ENCODE measurements at regions of chr3 and their contacts with region 1.

Region 1: DNA sequence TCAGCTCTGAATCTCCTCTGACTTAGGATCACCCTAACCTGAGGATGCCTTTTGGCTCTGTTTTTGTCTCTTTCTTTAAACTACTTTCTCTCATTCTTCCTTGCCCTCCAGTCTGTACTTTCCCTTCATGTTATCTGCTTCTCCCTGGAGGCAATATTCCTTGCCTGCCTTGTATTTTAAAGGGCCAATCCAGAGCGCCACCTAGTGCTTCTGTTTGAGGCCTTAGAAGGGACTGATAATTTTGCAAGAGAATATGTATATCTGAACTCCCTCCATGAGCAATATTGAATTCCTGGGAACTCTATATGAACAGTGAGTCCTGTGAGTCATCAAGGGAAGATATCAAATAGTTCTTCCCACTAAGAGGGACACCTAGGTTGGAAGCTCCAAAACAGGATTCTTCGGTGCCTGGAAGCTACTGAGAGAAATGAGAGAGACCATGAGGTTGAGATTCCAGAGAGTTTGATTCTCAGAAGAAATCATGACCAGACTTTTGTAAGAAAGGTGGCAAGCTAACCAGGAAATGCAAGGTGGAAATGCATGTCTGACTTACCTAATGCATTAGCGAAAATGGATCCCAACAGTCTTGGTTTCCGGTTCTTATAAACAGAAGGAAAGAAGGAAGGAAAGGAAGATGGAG is 203.8 kb upstream of the CD96 start:
- DNase-seq: peak; percentile 69
- H3K4me3 Mint-ChIP-seq: no peak overlapping the region
- H3K27ac Mint-ChIP-seq: no peak overlapping the region
- H3K4me1 Mint-ChIP-seq: peaks cover 13% of the 10 kb centered on the region
- H3K27me3 Mint-ChIP-seq: no peaks in the 10 kb centered on the region
- CTCF ChIP-seq: peak; percentile 47

Region 2: DNA sequence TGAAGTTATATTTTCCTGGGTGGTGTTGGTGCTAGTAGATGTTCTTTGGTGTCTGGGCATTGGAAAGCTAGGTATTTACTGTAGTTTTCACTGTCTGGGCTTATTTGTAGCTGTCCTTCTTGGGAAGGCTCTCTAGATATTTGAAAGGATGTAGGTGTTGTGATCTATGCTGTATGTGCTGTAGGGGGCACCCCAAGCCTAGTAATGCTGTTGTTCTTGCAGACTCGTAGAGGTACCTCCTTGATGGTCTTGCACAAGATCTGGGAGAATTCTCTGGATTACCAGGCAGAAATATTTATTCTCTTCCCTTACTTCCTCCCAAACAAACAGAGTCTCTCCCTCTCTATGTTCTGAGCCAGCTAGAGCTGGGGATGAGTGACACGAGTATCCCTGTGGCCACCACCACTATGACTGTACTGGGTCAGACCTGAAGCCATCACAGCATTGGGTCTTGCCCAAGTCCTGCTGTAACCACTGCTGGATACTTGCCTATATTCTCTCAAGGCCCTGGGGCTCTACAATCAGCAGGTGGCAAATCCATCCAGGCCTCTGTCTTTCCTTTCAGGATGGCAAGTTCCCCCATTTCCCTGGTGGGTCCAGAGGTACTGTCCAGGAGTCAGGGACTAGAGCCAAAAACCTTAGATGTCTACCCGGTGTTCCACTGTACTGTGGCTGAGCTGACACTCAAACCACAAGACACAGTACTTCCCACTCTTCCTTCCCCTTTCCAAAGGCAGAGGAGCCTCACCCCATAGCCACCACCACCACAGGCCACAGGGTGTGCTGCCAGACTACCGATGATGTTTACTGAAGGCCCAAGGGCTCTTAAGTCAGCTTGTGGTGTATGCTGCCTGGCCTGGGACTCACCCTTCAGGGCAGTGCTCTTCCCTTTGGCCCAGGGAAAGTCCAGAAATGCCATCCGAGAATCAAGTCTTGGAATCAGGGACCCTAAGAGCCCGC is 1805.6 kb before region 1 on chr3:
- CTCF ChIA-PET with region 1: no interaction called
- intact Hi-C with region 1: loop called (anchors 5 kb)
- DNase-seq: peak; percentile 84
- H3K4me3 Mint-ChIP-seq: no peak overlapping the region
- H3K27ac Mint-ChIP-seq: peak overlapping the region; percentile 4
- H3K4me1 Mint-ChIP-seq: peaks cover 15% of the 10 kb centered on the region
- H3K27me3 Mint-ChIP-seq: no peaks in the 10 kb centered on the region
- CTCF ChIP-seq: peak; percentile 21

Region 3: DNA sequence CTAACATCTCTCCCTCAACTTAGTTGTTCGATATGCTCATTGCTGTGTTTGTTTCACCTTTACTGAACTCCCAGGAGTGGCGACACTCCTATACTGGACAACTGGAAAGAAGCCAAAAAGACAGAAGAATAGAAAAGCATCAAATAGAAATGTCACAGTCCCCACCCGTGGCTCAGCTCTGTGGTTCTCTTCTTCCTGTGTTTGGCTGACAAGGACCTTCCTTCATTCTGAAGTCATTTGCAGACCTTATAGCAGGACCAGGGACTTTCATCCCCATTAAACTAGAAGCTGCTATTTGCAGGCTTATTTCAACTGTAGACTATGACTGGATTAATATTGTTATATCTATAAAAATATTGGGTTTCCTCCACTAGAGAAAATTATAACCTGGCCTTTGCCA is 140.7 kb before region 1 on chr3:
- CTCF ChIA-PET with region 1: no interaction called
- intact Hi-C with region 1: loop called (anchors 5 kb)
- DNase-seq: no peak
- H3K4me3 Mint-ChIP-seq: no peak overlapping the region
- H3K27ac Mint-ChIP-seq: no peak overlapping the region
- H3K4me1 Mint-ChIP-seq: peaks cover 14% of the 10 kb centered on the region
- H3K27me3 Mint-ChIP-seq: no peaks in the 10 kb centered on the region
- CTCF ChIP-seq: no peak

Region 4: DNA sequence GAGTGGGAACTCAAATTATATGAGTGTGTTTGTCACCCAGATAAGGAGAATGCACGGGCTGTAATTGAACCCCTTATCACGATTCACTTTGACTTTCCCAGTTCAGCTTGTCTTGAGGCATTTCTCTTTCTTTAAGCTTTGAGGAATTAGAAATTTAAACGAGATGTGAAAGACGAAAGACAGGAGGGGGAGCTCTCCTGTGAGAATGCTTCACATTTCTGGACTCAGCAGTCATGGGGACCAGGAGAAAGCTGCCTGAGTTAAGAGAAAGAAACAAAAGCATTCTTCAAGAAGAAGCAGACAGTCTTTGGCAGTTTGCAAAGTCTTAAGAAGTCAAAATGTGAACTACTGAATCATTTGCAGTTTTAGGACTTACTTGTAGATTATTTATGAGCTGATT is 61.0 kb before region 1 on chr3:
- CTCF ChIA-PET with region 1: no interaction called
- intact Hi-C with region 1: loop called (anchors 2 kb)
- DNase-seq: no peak
- H3K4me3 Mint-ChIP-seq: no peak overlapping the region
- H3K27ac Mint-ChIP-seq: no peak overlapping the region
- H3K4me1 Mint-ChIP-seq: peaks cover 9% of the 10 kb centered on the region
- H3K27me3 Mint-ChIP-seq: no peaks in the 10 kb centered on the region
- CTCF ChIP-seq: no peak

Region 5: GRCh38 chr3:111539351-111540331 is 201.5 kb after region 1 on chr3:
- CTCF ChIA-PET with region 1: no interaction called
- intact Hi-C with region 1: loop called (anchors 5 kb)
- DNase-seq: peak; percentile 82
- H3K4me3 Mint-ChIP-seq: peak overlapping the region; percentile 39
- H3K27ac Mint-ChIP-seq: peak overlapping the region; percentile 11
- H3K4me1 Mint-ChIP-seq: peaks cover 32% of the 10 kb centered on the region
- H3K27me3 Mint-ChIP-seq: no peaks in the 10 kb centered on the region
- CTCF ChIP-seq: peak; percentile 74